ENCODE measurements at regions of chr1 and their contacts with region 1.

Region 1: GRCh38 chr1:93680757-93681550 is 683 bp downstream of the BCAR3 start:
- DNase-seq: peak; percentile 91
- ATAC-seq: peak; percentile 91

Region 2: DNA sequence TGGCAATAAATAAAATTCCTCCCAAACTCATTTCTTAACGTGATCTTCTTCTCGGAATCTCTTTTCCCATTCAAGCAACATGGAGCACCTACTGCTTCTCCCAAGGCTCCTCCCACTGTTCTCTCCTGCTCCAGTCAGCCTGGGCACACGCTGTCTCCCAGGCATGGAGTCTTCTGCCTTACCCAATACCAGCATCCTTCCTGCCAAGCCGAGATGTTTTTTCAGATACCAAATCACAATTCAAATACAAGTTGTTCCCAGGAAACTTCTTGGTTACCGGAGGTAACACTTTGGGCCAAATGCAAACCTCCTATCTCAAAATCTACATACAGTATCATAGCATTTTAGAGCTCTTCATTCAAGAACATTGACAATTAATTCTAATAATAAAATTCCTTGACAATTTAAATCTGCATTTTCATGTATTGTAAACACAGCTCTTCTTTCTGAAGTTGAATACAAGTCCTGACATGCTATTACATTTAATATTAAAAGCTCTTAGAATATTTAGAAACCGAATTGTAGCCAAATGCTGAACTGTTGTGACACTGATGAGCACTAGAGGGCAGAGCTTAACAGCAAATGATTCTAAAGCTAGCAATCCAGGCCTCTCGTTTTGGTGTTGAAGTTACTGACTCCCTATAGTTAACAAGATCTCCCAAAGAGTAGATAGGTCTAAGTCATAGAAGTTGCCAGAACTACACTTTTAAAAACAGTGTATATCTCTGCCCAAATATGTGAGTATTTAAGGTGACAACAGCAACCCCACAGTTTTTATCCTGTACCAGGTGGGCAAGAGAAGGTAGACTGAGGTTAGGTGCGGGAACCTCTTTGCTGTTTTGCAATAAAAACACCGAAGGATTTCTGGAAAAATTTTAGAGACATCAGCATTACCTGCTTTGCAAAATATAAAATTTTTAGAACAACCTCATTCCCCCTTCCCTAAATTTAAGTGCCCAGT is 51.6 kb before region 1 on chr1:
- intact Hi-C with region 1: loop called (anchors 2 kb)
- DNase-seq: no peak
- ATAC-seq: peak; percentile 59

Region 3: DNA sequence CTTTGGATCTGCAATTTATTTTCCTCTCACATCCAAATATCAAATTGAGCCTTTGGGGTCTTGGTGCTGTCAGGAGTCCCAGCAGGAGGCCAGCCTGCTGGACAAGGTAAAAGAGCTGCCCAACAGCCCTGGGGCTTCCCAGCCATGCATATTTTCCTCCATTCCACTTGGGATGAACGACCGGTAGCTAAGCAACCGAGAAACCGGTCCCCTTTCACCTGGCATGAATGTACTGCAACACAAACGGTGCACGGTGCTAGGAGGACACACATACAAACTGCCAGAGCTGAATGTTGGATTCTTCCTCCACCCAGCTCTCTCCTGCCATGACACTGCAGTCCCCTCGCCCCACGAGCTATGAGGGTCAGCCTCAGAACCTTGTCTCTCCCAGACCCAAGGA is 42.0 kb before region 1 on chr1:
- intact Hi-C with region 1: loop called (anchors 2 kb)
- DNase-seq: no peak
- ATAC-seq: peak; percentile 24

Region 4: DNA sequence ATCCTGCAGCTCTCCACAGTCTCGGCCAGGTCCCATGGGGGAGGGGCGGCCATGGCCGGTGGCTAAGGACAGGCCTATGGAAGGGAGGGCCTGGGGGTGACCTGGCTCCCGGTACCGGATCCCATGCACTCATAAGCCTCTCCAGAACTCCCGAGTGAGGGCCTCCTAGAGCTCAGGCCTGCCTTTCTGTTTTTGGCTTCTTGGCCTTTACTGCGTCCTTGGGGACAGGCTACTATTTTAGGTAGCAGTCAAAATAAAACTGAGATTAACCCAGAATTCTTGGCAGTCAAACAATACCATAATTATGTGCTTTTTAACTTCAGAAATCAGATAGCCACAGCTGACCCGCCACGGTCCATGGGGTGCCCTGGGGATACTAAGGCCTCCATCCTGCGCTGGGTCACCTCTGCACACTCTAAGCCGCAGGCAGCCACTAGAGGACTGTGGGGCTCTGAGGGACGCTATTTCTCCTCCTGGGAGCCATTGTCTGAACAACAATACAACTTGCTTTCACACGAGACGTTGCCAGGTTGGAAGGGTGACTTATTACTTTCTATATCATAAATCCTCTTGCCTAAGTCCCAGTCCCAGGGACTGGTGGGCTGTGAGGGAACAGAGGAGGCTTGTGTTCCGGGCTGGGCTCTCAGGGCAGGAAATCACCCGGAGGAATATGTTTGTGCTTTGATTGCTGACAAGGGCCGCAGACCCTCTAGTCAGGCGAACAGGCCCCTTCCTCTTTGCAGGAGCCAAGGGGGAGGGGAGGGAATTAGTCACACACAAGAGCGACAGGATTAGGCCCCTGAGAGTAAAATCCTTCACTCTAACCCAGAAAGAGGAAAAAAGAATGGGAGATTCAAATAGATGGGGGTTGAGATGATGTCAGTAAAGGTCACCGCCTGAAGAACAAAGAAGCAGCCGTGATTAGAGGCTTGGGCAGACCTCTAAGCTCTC is 41.4 kb after region 1 on chr1:
- intact Hi-C with region 1: loop called (anchors 5 kb)
- DNase-seq: no peak
- ATAC-seq: peak; percentile 87

Region 5: GRCh38 chr1:93784538-93784937 is 103.6 kb after region 1 on chr1:
- intact Hi-C with region 1: no loop called
- DNase-seq: no peak
- ATAC-seq: no peak

Region 6: DNA sequence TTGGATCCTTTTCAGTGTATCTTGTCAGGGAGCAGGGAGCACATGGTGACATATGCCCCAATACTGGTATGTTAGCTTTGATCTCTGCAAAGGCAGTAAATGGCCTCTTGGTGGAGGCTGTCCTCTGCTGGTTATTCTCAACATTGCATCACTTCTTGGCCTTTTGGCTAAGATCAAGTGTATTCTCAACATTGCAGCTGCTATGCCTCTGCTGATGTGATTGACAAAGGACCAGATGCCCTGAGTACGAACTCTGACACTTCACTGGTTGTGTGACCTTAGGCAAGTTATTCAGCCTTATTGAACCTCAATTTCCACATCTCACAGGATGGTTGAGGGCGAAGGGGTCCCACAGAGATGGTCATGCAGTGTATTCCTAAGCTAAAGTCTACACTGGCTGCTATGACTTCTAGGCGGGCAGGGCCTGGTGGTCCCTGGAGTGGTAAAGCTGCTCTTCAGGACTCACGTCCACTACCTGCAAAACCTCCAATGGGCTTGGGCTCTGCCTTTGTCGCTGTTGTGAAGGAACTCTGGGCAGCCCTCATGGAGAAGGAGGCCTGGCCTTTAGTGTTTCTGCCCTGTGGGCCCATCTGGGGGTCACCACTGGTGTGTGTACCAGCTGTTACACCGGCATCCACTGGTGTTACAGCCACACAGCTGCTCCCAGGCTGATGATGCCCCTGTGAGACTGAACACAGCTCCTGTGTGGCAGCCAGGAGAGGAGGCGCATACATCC is 133.3 kb after region 1 on chr1:
- intact Hi-C with region 1: loop called (anchors 2 kb)
- DNase-seq: no peak
- ATAC-seq: peak; percentile 73

Region 7: GRCh38 chr1:93846211-93846991 is 165.4 kb after region 1 on chr1:
- intact Hi-C with region 1: loop called (anchors 2 kb)
- DNase-seq: peak; percentile 97
- ATAC-seq: peak; percentile 77